Breast epithelium (tissue), 4 donors: ENCODE measurements at regions of chr7 and their contacts with region 1.

Region 1: DNA sequence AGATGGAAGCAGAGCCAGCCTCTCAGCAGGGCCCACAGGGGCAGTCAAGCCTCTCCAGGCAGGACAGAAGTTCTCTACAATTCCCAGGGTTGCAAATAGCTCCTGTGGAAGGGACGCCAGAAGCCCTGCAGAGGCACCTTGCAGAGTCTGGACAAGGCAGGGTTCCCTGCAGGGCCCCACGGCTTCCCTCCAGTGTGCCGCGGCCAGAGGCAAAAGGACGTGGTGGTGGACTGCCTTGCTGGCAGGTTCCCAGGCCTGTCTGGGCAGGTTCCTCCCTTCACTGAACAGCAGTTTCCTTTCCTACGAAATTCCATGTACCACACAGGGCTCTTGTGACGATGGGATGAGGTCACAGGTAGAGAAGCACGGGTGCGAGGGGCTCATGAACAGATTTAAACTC is 25.1 kb downstream of the UPP1 start:
- DNase-seq: no peak
- H3K4me3 ChIP-seq: no peak overlapping the region
- H3K27ac ChIP-seq: no peak overlapping the region
- H3K4me1 ChIP-seq: no peaks in the 10 kb centered on the region
- H3K27me3 ChIP-seq: no peaks in the 10 kb centered on the region
- CTCF ChIP-seq: no peak
- POLR2A ChIP-seq: no peak

Region 2: GRCh38 chr7:47846117-47846836 is 267.8 kb before region 1 on chr7:
- intact Hi-C with region 1: no loop called
- DNase-seq: no peak
- H3K4me3 ChIP-seq: no peak overlapping the region
- H3K27ac ChIP-seq: no peak overlapping the region
- H3K4me1 ChIP-seq: no peaks in the 10 kb centered on the region
- H3K27me3 ChIP-seq: no peaks in the 10 kb centered on the region
- CTCF ChIP-seq: no peak
- POLR2A ChIP-seq: no peak

Region 3: GRCh38 chr7:47954231-47954911 is 159.7 kb before region 1 on chr7:
- intact Hi-C with region 1: loop called (anchors 1 kb)
- DNase-seq: no peak
- H3K4me3 ChIP-seq: no peak overlapping the region
- H3K27ac ChIP-seq: no peak overlapping the region
- H3K4me1 ChIP-seq: no peaks in the 10 kb centered on the region
- H3K27me3 ChIP-seq: no peaks in the 10 kb centered on the region
- CTCF ChIP-seq: no peak
- POLR2A ChIP-seq: no peak